ENCODE measurements at regions of chr4 and their contacts with region 1.

Region 1: GRCh38 chr4:38889143-38889542 is 21.5 kb downstream of the FAM114A1 start:
- DNase-seq: no peak
- H3K4me3 Mint-ChIP-seq: peak overlapping the region; percentile 63
- H3K27ac Mint-ChIP-seq: peak overlapping the region; percentile 91
- H3K4me1 Mint-ChIP-seq: peaks cover 41% of the 10 kb centered on the region
- H3K27me3 Mint-ChIP-seq: no peaks in the 10 kb centered on the region

Region 2: DNA sequence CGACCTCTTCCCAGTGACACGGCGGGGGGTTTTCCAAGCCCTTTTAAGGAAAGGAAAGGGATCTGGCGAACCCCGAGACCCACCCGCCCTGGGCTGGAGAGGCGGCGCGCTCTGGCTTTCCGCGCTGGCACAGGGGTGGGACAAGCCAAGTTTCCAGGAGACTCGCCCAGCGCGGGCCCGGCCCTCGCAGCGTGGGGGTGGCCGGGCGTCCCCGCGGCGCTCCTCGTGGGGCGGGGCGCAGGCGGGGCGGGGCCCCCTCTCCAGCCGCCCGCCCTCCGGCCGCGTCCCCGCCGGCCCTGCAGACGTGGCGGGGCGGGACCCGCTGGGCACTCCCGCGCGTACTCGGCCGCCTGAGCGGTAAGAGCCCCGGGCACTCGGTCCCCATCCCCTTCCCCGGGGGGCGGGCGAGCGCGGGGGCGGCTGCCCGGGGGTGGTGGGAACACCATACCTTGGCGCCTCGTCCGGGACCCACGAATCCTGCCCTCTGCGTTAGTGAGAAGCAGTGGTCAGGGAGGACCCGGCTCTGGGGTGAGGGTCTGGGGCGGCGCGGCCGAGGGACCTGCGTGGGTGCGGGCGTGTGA is 21.6 kb before region 1 on chr4 and contains the start of gene FAM114A1:
- intact Hi-C with region 1: loop called (anchors 1 kb)
- DNase-seq: peak; percentile 43
- H3K4me3 Mint-ChIP-seq: peak within 1 kb of the TSS; percentile 80
- H3K27ac Mint-ChIP-seq: no peak within 1 kb of the TSS
- H3K4me1 Mint-ChIP-seq: peaks cover 13% of the 10 kb centered on the region
- H3K27me3 Mint-ChIP-seq: peaks cover 3% of the 10 kb centered on the region
- total RNA-seq, gene FAM114A1: 0.22 and 0.49 TPM in 2 replicates

Region 3: DNA sequence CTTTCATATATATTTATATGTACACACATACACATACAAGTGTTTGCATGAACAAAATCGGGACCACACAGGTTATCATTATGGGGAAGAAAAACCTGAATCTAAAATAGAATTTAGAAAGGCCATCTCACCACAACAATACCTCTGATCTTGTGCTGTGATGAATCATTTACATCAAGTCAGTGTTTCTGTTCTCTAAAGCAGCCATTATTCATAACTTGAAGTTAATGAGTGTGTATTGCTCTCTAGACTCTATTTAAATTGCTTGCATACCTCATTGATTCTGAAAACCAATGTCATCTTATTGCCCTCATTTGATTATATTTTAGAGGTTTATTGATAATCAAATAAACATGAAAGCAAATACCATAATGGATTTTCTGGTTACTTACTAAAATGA is 50.0 kb after region 1 on chr4:
- intact Hi-C with region 1: loop called (anchors 1 kb)
- DNase-seq: no peak
- H3K4me3 Mint-ChIP-seq: no peak overlapping the region
- H3K27ac Mint-ChIP-seq: peak overlapping the region; percentile 49
- H3K4me1 Mint-ChIP-seq: peaks cover 43% of the 10 kb centered on the region
- H3K27me3 Mint-ChIP-seq: no peaks in the 10 kb centered on the region

Region 4: GRCh38 chr4:38987491-38987890 is 98.3 kb after region 1 on chr4:
- intact Hi-C with region 1: loop called (anchors 1 kb)
- DNase-seq: no peak
- H3K4me3 Mint-ChIP-seq: peak overlapping the region; percentile 2
- H3K27ac Mint-ChIP-seq: peak overlapping the region; percentile 62
- H3K4me1 Mint-ChIP-seq: peaks cover 66% of the 10 kb centered on the region
- H3K27me3 Mint-ChIP-seq: no peaks in the 10 kb centered on the region

Region 5: DNA sequence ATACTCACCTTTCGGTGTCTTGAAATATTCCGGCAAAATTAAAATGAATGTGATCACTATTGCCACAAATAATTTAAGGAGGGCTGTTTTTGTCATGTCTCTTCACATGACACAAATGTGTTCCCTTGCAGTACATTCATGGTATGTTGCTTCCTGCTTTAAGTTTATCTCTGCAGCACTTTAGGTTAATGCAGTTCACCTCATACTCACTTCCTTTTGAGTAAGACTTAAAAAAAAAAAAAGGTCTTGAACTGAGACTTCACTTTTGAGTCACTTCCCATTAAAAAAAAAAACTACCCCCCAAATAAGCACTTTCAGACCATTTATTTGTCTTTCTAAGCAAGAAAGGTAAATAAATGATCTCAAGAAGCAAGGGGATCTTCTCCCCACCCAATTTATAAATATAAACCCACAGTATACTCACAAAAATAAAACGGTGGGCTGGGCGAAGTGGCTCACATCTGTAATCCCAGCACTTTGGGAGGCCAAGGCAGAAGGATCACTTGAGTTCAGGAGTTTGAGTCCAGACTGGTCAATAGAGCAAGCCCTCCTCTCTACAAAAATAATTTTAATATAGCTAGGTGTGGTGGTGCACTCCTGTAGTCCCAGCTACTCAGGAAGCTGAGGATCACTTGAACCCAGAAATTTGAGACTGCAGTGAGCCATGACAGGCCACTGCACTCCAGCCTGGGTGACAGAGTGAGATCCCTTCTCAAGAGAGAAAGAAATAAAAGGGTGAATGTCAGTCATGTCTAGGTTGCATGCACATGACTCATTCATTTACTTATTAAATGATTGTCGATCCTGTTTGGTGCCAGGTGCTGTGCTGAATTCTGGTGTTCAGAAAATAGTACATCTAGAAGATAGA is 143.3 kb after region 1 on chr4 and contains the start of gene TMEM156:
- intact Hi-C with region 1: loop called (anchors 1 kb)
- DNase-seq: no peak
- H3K4me3 Mint-ChIP-seq: peak within 1 kb of the TSS; percentile 93
- H3K27ac Mint-ChIP-seq: peak within 1 kb of the TSS; percentile 87
- H3K4me1 Mint-ChIP-seq: peaks cover 46% of the 10 kb centered on the region
- H3K27me3 Mint-ChIP-seq: no peaks in the 10 kb centered on the region
- total RNA-seq, gene TMEM156: 27.7 and 29.4 TPM in 2 replicates

Region 6: DNA sequence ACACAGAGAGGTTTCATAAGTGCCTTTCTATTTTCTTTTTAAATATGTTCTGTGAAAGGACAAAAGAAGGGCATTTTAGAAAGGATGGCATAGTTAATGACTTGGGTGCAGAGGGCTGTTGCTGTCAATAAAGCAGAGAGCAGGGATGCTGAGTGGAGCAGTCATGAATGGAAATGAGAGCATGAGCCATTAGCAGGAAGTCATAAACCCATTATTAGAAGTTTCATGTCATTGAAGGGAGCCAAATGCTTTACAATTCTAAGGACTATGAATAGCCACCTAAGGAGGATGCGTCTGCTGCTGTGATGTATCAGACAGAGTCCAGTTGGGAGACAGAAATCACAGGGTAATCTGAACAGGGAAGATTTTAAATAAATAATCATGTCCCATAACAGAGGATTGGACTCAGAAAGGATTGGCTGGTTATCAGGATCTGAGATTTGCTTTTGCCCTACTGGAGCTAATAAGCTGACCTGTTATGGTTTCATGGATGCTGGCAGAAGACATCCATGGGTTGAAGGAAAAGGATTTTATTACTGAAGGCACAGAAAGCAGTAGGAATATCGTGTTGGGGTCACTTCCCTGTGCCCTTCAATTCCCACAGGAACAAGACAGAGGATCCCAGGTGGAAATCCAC is 245.7 kb after region 1 on chr4:
- intact Hi-C with region 1: loop called (anchors 1 kb)
- DNase-seq: no peak
- H3K4me3 Mint-ChIP-seq: no peak overlapping the region
- H3K27ac Mint-ChIP-seq: no peak overlapping the region
- H3K4me1 Mint-ChIP-seq: peaks cover 19% of the 10 kb centered on the region
- H3K27me3 Mint-ChIP-seq: no peaks in the 10 kb centered on the region

Measured in activated T-helper 1 cell treated with anti-CD3 and anti-CD28 coated beads, Interleukin-12 subunit alpha, Interleukin-12 subunit beta, Interleukin-2, Interleukin-4 antibody, amounts not matched to agents 30 ng/mL and 10 ng/mL and 1 ng/mL, durations not matched to agents 14 hours and 24 hours and 36 hours (primary cell).